ENCODE measurements at regions of chr1 and their contacts with region 1.

Region 1: GRCh38 chr1:34742667-34743270 is 12.1 kb upstream of the GJB5 start:
- DNase-seq: peak; percentile 83
- H3K4me3 Mint-ChIP-seq: no peak overlapping the region
- H3K27ac Mint-ChIP-seq: no peak overlapping the region
- H3K4me1 Mint-ChIP-seq: no peaks in the 10 kb centered on the region
- H3K27me3 Mint-ChIP-seq: peaks cover 2% of the 10 kb centered on the region

Region 2: GRCh38 chr1:34460193-34460592 is 282.6 kb before region 1 on chr1:
- CTCF ChIA-PET with region 1: interaction called, 37 read pairs
- POLR2A ChIA-PET with region 1: no interaction called
- intact Hi-C with region 1: loop called (anchors 5 kb)
- DNase-seq: peak; percentile 55
- H3K4me3 Mint-ChIP-seq: no peak overlapping the region
- H3K27ac Mint-ChIP-seq: no peak overlapping the region
- H3K4me1 Mint-ChIP-seq: no peaks in the 10 kb centered on the region
- H3K27me3 Mint-ChIP-seq: peaks cover 9% of the 10 kb centered on the region

Region 3: DNA sequence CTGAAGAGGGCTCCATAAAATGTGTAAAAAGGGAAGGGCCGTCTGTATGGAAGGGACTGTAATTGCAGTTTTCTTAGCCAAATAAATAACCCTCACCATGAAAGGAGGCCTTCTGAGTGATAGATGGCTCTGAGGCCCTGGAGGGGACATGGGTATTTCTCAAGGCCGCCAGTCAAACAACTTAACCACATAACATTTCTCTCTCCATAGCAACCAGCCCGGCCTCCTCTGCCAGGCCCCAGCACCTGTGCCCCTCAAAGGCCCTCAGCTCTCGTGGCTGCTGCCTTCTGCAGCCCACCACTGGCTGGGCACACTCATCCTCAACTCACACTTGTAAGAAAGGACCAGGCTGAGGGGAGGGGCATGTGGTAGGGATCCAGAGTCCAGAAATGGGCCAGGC is 45.0 kb before region 1 on chr1:
- CTCF ChIA-PET with region 1: no interaction called
- POLR2A ChIA-PET with region 1: no interaction called
- intact Hi-C with region 1: no loop called
- DNase-seq: no peak
- H3K4me3 Mint-ChIP-seq: no peak overlapping the region
- H3K27ac Mint-ChIP-seq: no peak overlapping the region
- H3K4me1 Mint-ChIP-seq: no peaks in the 10 kb centered on the region
- H3K27me3 Mint-ChIP-seq: peaks cover 8% of the 10 kb centered on the region

Region 4: GRCh38 chr1:34721646-34722355 is 21.0 kb before region 1 on chr1:
- CTCF ChIA-PET with region 1: interaction called, 13 read pairs
- POLR2A ChIA-PET with region 1: interaction called, 3 read pairs
- intact Hi-C with region 1: no loop called
- DNase-seq: no peak
- H3K4me3 Mint-ChIP-seq: no peak overlapping the region
- H3K27ac Mint-ChIP-seq: no peak overlapping the region
- H3K4me1 Mint-ChIP-seq: no peaks in the 10 kb centered on the region
- H3K27me3 Mint-ChIP-seq: peaks cover 42% of the 10 kb centered on the region

Region 5: DNA sequence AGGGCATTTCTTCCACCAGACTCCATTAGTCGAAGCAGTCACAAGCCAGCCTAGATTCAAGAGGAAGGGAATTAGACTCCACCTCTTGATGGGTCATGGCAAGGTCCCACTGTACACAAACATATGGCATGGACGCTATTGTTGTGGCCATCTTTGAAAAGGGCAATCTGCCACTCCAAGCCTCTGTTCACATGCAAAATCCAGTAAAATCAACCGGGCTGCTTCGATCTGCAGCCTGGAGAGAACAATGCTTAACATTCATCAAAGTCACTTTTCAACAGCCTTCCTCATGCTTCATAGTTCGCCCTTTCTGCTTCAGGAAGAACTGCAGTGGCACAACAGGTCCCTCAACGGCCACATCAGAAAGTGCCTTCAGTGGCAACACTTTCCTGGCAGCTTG is 15.9 kb before region 1 on chr1:
- CTCF ChIA-PET with region 1: interaction called, 17 read pairs
- POLR2A ChIA-PET with region 1: interaction called, 3 read pairs
- intact Hi-C with region 1: no loop called
- DNase-seq: no peak
- H3K4me3 Mint-ChIP-seq: no peak overlapping the region
- H3K27ac Mint-ChIP-seq: no peak overlapping the region
- H3K4me1 Mint-ChIP-seq: no peaks in the 10 kb centered on the region
- H3K27me3 Mint-ChIP-seq: peaks cover 20% of the 10 kb centered on the region

Region 6: DNA sequence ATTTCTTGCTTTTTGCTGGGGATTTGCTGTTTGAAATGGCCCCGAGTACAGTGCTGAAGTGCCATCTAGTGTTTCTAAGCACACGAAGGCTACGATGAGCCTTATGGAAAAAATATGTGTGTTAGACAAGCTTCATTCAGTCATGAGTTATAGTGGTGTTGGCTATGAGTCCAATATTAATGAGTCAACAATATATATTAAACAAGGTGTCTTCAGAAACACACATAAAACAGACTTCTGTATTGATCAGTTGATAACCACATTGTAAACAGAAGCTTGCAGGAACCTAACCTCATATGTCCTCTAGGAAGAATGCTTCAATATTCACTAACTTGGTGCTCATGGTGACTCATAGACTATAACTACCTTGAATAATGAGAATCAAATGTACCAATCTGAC is 10.4 kb after region 1 on chr1:
- CTCF ChIA-PET with region 1: interaction called, 18 read pairs
- POLR2A ChIA-PET with region 1: no interaction called
- intact Hi-C with region 1: no loop called
- DNase-seq: no peak
- H3K4me3 Mint-ChIP-seq: no peak overlapping the region
- H3K27ac Mint-ChIP-seq: no peak overlapping the region
- H3K4me1 Mint-ChIP-seq: no peaks in the 10 kb centered on the region
- H3K27me3 Mint-ChIP-seq: peaks cover 1% of the 10 kb centered on the region

Measured in activated CD4-positive, alpha-beta memory T cell treated with anti-CD3 and anti-CD28 coated beads for 36 hours (primary cell).